Caco-2 (cell line): ENCODE measurements at regions of chr1 and their contacts with region 1.

Region 1: DNA sequence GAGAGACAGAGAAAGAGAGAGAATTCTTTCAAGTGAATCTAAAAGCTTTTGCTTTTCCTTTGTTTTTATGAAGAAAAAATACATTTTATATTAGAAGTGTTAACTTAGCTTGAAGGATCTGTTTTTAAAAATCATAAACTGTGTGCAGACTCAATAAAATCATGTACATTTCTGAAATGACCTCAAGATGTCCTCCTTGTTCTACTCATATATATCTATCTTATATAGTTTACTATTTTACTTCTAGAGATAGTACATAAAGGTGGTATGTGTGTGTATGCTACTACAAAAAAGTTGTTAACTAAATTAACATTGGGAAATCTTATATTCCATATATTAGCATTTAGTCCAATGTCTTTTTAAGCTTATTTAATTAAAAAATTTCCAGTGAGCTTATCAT is 117.6 kb downstream of the PTPRC start:
- DNase-seq: no peak
- H3K4me3 ChIP-seq: no peak overlapping the region
- H3K4me3 Mint-ChIP-seq: no peak overlapping the region
- H3K27ac Mint-ChIP-seq: no peak overlapping the region
- H3K4me1 ChIP-seq: no peaks in the 10 kb centered on the region
- H3K4me1 Mint-ChIP-seq: peaks cover 5% of the 10 kb centered on the region
- H3K27me3 ChIP-seq: no peaks in the 10 kb centered on the region
- H3K27me3 Mint-ChIP-seq: peaks cover 8% of the 10 kb centered on the region
- CTCF ChIP-seq: no peak

Region 2: GRCh38 chr1:198858033-198858432 is 101.6 kb after region 1 on chr1:
- CTCF ChIA-PET with region 1: no interaction called
- POLR2A ChIA-PET with region 1: no interaction called
- intact Hi-C with region 1: no loop called
- DNase-seq: no peak
- H3K4me3 ChIP-seq: no peak overlapping the region
- H3K4me3 Mint-ChIP-seq: no peak overlapping the region
- H3K27ac Mint-ChIP-seq: no peak overlapping the region
- H3K4me1 ChIP-seq: peaks cover 22% of the 10 kb centered on the region
- H3K4me1 Mint-ChIP-seq: peaks cover 17% of the 10 kb centered on the region
- H3K27me3 ChIP-seq: no peaks in the 10 kb centered on the region
- H3K27me3 Mint-ChIP-seq: no peaks in the 10 kb centered on the region
- CTCF ChIP-seq: no peak

Region 3: DNA sequence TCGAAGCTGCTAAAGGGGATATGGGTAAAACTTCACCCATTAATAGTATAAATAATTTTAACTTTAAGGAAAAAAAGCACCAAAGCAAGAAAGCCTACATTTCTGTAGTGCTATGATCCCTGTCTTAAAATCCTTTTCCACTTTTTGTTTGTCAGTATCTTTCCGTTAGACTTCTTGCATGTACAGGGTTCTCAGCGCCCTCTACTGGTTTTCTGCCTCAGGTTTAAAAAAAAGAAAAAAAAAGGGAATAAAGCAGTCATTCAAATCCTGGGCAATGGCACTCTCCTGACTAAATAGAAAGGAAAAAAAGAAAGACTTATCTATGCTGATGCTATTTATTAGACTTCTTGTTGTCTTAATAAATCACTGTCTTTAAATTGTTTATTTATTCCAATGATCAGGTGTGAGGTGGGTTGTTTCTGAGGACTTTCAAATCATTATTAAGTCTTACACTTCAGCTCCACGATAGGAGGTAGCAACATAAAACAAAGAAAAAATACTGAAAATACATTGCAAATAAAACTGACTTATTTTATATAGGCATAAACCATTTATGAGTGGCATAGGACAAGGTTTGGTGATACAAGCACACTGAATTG is 795.6 kb after region 1 on chr1:
- CTCF ChIA-PET with region 1: no interaction called
- POLR2A ChIA-PET with region 1: no interaction called
- intact Hi-C with region 1: loop called (anchors 2 kb)
- DNase-seq: peak in 1 of 2 experiments; percentile 67
- H3K4me3 ChIP-seq: no peak overlapping the region
- H3K4me3 Mint-ChIP-seq: no peak overlapping the region
- H3K27ac Mint-ChIP-seq: no peak overlapping the region
- H3K4me1 ChIP-seq: no peaks in the 10 kb centered on the region
- H3K4me1 Mint-ChIP-seq: no peaks in the 10 kb centered on the region
- H3K27me3 ChIP-seq: no peaks in the 10 kb centered on the region
- H3K27me3 Mint-ChIP-seq: no peaks in the 10 kb centered on the region
- CTCF ChIP-seq: peak; percentile 54 to 75